CD4-positive, alpha-beta memory T cell (primary cell): ENCODE measurements at regions of chr2 and their contacts with region 1.

Region 1: DNA sequence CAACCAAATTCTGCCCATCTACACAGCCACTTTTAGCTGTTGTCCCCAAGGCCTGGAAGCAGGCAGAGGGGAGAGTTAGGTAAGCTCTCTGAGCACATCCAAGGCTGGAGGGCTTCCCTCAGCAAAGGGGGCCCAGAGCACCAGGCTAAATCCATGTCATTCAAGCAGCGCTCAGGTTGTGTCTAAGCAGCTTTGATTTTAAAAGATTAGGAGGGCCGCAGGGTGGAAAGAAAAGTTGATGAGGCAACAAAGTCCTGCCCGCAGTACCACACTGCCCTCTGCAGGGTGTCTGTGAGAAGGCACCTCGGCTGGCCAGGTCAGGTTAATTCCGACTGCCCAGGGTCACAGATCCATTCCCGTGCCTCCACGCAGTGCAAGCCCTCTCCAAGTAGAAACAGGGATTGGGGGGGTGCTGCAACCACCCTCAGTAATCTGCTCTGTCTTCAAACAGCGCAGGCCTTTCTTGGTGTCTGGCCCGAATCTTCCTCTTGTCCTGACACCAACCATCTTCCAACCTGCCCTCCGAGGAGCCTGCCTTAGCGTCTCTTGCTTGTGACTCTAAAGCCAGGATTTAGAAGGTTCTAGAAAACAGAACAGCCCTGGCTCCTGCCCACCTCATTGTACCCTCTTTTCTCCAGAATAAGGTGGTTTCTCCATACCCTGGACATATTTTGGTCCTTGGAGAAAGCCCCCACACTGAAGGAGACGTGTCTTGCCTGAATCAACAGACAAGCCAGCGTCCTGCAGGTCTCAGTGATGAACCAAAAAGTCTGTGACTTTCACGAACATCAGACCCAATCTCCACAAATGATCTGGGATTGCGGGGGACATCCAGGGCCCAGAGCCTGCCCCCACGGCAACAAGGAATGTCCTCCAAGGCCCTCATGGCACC is 289.2 kb downstream of the TNS1 start:
- DNase-seq: peak; percentile 51 to 60 (median 57)
- H3K4me3 ChIP-seq: no peak overlapping the region
- H3K4me3 Mint-ChIP-seq: no peak overlapping the region
- H3K27ac ChIP-seq: no peak overlapping the region
- H3K27ac Mint-ChIP-seq: no peak overlapping the region
- H3K4me1 ChIP-seq: no peaks in the 10 kb centered on the region
- H3K4me1 Mint-ChIP-seq: peaks cover 0 to 1% (median 0%) of the 10 kb centered on the region in 4 donors
- H3K27me3 ChIP-seq: no peaks in the 10 kb centered on the region
- H3K27me3 Mint-ChIP-seq: no peaks in the 10 kb centered on the region

Region 2: GRCh38 chr2:216450784-216451183 is 1262.9 kb before region 1 on chr2:
- CTCF ChIA-PET with region 1: no interaction called
- POLR2A ChIA-PET with region 1: no interaction called
- intact Hi-C with region 1: no loop called
- DNase-seq: no peak
- H3K4me3 ChIP-seq: no peak overlapping the region
- H3K4me3 Mint-ChIP-seq: no peak overlapping the region
- H3K27ac ChIP-seq: no peak overlapping the region
- H3K27ac Mint-ChIP-seq: no peak overlapping the region
- H3K4me1 ChIP-seq: no peaks in the 10 kb centered on the region
- H3K4me1 Mint-ChIP-seq: no peaks in the 10 kb centered on the region
- H3K27me3 ChIP-seq: no peaks in the 10 kb centered on the region
- H3K27me3 Mint-ChIP-seq: no peaks in the 10 kb centered on the region

Region 3: DNA sequence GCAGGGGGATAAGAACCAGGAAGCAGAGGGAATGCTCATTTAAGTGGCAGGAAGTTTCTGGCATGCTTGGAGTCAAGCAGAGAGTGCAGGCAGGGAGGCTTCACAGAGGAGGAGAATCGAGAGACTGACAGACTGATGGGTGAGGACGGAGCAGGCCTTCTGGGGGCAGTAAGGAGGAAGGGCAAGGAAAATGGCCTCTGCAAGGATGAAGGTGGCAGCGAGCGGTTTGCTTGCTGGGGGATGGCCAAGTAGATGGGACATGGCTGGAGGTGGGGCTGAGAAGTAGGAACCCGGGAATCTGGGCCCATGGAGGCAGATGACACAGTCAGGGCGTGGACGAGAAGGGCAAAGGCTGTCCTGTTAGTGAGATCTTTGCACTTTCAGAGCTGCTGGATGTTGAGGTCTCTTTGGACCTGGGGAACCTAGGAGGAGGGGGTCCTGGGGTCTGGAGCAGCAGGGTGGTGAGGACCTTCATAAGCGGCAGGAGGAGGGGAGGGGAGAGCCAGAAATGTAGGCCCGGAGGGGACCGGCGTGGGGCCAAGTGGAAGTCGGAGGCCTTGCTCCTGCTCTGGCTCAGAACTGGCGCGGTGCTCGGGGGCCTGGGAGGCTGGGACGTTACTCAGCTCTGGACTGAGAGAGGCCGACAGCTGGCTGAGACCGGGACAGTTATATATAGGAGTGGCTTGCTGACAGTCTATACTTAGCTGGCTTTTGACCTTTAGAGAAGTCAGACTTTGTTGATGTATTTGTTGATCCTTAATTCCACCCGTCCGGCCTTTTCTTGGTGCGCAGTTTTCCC is 1034.2 kb before region 1 on chr2:
- CTCF ChIA-PET with region 1: interaction called, 89 read pairs
- POLR2A ChIA-PET with region 1: no interaction called
- intact Hi-C with region 1: loop called (anchors 1 kb)
- DNase-seq: no peak
- H3K4me3 ChIP-seq: no peak overlapping the region
- H3K4me3 Mint-ChIP-seq: no peak overlapping the region
- H3K27ac ChIP-seq: no peak overlapping the region
- H3K27ac Mint-ChIP-seq: no peak overlapping the region
- H3K4me1 ChIP-seq: no peaks in the 10 kb centered on the region
- H3K4me1 Mint-ChIP-seq: peaks cover 0 to 6% (median 4%) of the 10 kb centered on the region in 4 donors
- H3K27me3 ChIP-seq: no peaks in the 10 kb centered on the region
- H3K27me3 Mint-ChIP-seq: peaks cover 13 to 26% of the 10 kb centered on the region in 2 donors

Region 4: DNA sequence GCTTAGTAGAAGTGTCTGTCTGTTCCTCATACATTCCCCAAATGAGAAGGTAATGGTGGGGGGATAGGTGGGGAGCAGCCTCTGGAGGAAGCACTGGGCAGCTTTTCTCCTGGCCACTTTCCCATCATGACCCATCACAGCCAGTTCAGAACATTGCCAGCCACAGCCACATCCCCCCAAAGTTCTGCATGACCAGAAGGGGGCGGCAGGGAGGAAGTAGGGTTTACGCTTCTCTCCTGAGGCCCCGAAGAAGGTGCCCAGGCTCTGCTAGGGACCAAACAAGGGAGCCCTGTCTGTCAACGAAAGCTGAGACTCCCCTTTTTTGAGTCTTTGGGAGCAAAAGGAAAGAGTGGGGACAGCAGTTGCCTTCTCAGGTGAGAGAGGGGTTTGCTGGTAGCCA is 1026.0 kb before region 1 on chr2:
- CTCF ChIA-PET with region 1: interaction called, 89 read pairs
- POLR2A ChIA-PET with region 1: no interaction called
- intact Hi-C with region 1: loop called (anchors 1 kb)
- DNase-seq: no peak
- H3K4me3 ChIP-seq: no peak overlapping the region
- H3K4me3 Mint-ChIP-seq: no peak overlapping the region
- H3K27ac ChIP-seq: no peak overlapping the region
- H3K27ac Mint-ChIP-seq: no peak overlapping the region
- H3K4me1 ChIP-seq: peaks cover 16% of the 10 kb centered on the region
- H3K4me1 Mint-ChIP-seq: peaks cover 9 to 17% (median 15%) of the 10 kb centered on the region in 4 donors
- H3K27me3 ChIP-seq: peaks cover 4% of the 10 kb centered on the region
- H3K27me3 Mint-ChIP-seq: peaks cover 39 to 48% of the 10 kb centered on the region in 2 donors

Region 5: GRCh38 chr2:216698895-216699294 is 1014.7 kb before region 1 on chr2:
- CTCF ChIA-PET with region 1: interaction called, 7 read pairs
- POLR2A ChIA-PET with region 1: no interaction called
- intact Hi-C with region 1: loop called (anchors 1 kb)
- DNase-seq: peak in 2 of 5 donors; percentile 12 to 14
- H3K4me3 ChIP-seq: no peak overlapping the region
- H3K4me3 Mint-ChIP-seq: no peak overlapping the region
- H3K27ac ChIP-seq: no peak overlapping the region
- H3K27ac Mint-ChIP-seq: no peak overlapping the region
- H3K4me1 ChIP-seq: peaks cover 3% of the 10 kb centered on the region
- H3K4me1 Mint-ChIP-seq: peaks cover 0 to 10% (median 2%) of the 10 kb centered on the region in 4 donors
- H3K27me3 ChIP-seq: peaks cover 12% of the 10 kb centered on the region
- H3K27me3 Mint-ChIP-seq: peaks cover 26% of the 10 kb centered on the region in 2 donors

Region 6: DNA sequence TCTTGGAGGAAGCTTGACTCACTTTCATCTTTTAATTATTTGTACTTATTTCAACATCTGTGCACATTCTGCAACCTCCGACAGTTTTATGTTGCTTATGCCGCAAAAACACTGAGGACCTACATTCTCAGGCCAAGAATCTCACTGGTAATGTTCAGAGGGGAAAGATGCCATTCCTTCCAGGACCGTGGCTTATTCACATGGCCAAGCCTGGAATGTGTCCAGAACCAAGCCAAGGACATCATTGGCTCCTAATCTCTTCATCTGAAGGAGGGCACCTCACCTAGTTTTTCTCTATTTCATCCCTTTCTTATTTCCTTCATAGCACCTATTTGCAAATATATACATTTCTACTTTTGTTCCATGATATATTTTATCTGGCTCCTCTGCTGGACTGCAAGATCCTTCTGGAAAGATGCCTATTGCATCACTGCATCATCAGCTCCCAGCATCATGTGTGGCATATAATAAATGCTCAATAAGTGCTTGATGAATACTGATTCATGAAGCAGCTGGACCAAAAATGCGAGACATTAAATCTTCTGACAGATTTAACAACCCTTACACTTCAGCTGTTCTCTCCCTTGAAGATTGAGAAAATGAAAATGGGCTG is 88.0 kb before region 1 on chr2:
- CTCF ChIA-PET with region 1: no interaction called
- POLR2A ChIA-PET with region 1: no interaction called
- intact Hi-C with region 1: no loop called
- DNase-seq: no peak
- H3K4me3 ChIP-seq: no peak overlapping the region
- H3K4me3 Mint-ChIP-seq: no peak overlapping the region
- H3K27ac ChIP-seq: no peak overlapping the region
- H3K27ac Mint-ChIP-seq: no peak overlapping the region
- H3K4me1 ChIP-seq: no peaks in the 10 kb centered on the region
- H3K4me1 Mint-ChIP-seq: no peaks in the 10 kb centered on the region
- H3K27me3 ChIP-seq: no peaks in the 10 kb centered on the region
- H3K27me3 Mint-ChIP-seq: no peaks in the 10 kb centered on the region

Region 7: GRCh38 chr2:217729421-217730053 is 15.9 kb after region 1 on chr2:
- CTCF ChIA-PET with region 1: interaction called, 16 read pairs
- POLR2A ChIA-PET with region 1: no interaction called
- intact Hi-C with region 1: no loop called
- DNase-seq: no peak
- H3K4me3 ChIP-seq: no peak overlapping the region
- H3K4me3 Mint-ChIP-seq: no peak overlapping the region
- H3K27ac ChIP-seq: no peak overlapping the region
- H3K27ac Mint-ChIP-seq: no peak overlapping the region
- H3K4me1 ChIP-seq: no peaks in the 10 kb centered on the region
- H3K4me1 Mint-ChIP-seq: peaks cover 0 to 9% (median under 1%) of the 10 kb centered on the region in 4 donors
- H3K27me3 ChIP-seq: no peaks in the 10 kb centered on the region
- H3K27me3 Mint-ChIP-seq: peaks cover under 1 to 2% of the 10 kb centered on the region in 2 donors